ENCODE measurements at regions of chr12 and their contacts with region 1.

Region 1: GRCh38 chr12:108950991-108951739 is 69.7 kb downstream of the SVOP start:
- DNase-seq: peak; percentile 59
- CTCF ChIP-seq: peak; percentile 71

Region 2: GRCh38 chr12:108664338-108665258 is 286.6 kb before region 1 on chr12:
- in situ Hi-C with region 1: loop called (anchors 25 kb)
- DNase-seq: peak; percentile 70
- CTCF ChIP-seq: peak; percentile 83

Region 3: GRCh38 chr12:109477185-109477962 is 526.2 kb after region 1 on chr12 and contains the starts of genes KCTD10 and UBE3B:
- in situ Hi-C with region 1: no loop called
- DNase-seq: peak; percentile 95
- CTCF ChIP-seq: no peak